Breast epithelium (tissue), 4 donors: ENCODE measurements at regions of chrX and their contacts with region 1.

Region 1: GRCh38 chrX:120457766-120458180 is 11.3 kb downstream of the LAMP2 start:
- DNase-seq: no peak
- H3K4me3 ChIP-seq: peak overlapping the region in 1 of 3 donors; percentile 13
- H3K27ac ChIP-seq: peak overlapping the region; percentile 65 to 75
- H3K4me1 ChIP-seq: no peaks in the 10 kb centered on the region
- H3K27me3 ChIP-seq: no peaks in the 10 kb centered on the region
- CTCF ChIP-seq: no peak
- POLR2A ChIP-seq: no peak

Region 2: DNA sequence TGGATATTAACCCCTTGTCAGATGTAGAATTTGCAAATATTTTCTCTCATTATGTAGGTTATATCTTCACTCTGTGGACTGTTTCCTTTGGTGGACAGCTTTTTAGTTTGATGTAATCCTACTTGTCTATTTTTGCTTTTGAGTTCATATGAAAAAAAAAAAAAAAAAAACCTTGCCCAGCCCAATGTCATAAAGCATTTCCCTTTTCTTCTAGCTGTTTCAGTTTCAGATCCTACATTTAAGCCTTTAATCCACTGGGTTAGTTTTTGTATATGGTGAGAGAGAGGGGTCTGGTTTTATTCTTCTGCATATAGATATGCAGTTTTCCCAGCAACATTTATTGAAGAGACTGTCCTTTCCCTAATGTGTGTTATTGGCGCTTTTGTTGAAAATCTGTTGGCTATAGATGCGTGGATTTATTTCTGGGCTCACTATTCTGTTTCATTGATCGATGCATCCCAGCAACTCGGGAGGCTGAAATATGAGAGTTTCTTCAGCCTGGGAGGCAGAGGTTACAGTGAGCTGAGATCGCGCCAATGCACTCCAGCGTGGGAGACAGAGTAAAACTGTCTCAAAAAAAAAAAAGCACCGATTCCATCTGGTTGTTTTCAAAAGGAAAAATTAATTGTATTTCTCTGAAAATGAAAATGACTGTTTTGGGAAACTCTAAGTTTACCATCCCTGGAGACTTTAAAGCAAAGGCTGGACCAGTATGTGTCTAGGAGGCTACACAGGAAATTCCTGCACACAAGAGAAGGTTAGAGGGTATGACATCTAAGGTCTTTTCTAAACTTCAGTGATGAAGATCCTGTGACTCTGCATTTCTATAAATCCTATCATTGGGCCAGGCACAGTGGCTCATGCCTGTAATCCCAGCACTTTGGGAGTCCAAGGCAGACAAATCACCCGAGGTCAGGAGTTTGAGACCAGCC is 928.2 kb before region 1 on chrX:
- intact Hi-C with region 1: loop called (anchors 5 kb)
- DNase-seq: no peak
- H3K4me3 ChIP-seq: no peak overlapping the region
- H3K27ac ChIP-seq: no peak overlapping the region
- H3K4me1 ChIP-seq: no peaks in the 10 kb centered on the region
- H3K27me3 ChIP-seq: no peaks in the 10 kb centered on the region
- CTCF ChIP-seq: no peak
- POLR2A ChIP-seq: no peak

Region 3: GRCh38 chrX:121084903-121085611 is 627.3 kb after region 1 on chrX:
- intact Hi-C with region 1: no loop called
- DNase-seq: no peak
- H3K4me3 ChIP-seq: no peak overlapping the region
- H3K27ac ChIP-seq: no peak overlapping the region
- H3K4me1 ChIP-seq: no peaks in the 10 kb centered on the region
- H3K27me3 ChIP-seq: peaks cover 0 to 3% of the 10 kb centered on the region in 2 donors
- CTCF ChIP-seq: no peak
- POLR2A ChIP-seq: no peak